ENCODE measurements at regions of chr1 and their contacts with region 1.

Region 1: DNA sequence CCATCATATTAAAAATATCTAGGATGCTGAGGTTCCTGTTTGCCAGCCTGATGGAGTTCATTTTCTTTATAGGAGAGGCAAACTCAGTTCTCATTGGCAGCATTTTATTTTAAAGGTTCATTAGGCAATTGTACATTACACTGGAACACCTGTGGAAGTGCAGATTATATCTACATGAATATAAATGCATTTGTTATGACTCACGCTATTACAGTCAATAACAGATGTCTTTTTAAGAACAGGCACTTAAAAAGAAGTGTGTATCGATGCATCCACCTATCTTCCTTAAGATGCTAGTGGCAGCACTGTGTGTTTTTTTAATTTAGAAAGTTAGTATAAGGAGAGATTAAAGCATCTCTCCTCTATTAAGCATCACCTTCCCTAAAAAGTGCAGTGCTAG is 276.5 kb downstream of the PRDM2 start:
- DNase-seq: no peak

Region 2: GRCh38 chr1:13960375-13960987 is 16.0 kb before region 1 on chr1:
- intact Hi-C with region 1: no loop called
- DNase-seq: peak; percentile 85

Region 3: DNA sequence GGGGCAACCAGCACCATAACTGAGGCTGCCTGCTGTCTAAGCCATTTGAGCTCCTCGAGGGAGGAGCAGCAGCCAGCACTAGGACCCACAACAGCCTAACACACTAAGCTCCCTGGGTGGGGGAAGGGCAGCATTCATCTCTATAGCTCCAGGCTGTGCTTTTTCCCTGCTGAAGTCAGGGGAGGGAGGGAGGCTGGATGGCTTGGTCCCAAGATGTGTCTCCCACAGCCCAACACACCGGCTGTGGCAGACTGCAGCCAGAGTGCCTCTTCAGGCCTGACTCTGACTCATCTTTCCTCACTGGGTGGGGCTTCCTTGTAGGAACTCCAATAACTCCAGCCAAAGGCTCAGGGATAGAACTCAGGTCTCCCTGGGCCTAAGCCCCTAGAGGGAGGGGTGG is 19.8 kb after region 1 on chr1:
- intact Hi-C with region 1: no loop called
- DNase-seq: no peak

Region 4: GRCh38 chr1:14755518-14756252 is 779.2 kb after region 1 on chr1:
- intact Hi-C with region 1: loop called in 1 of 2 experiments (anchors 10 kb)
- DNase-seq: no peak